ENCODE measurements at regions of chr9 and their contacts with region 1.

Region 1: DNA sequence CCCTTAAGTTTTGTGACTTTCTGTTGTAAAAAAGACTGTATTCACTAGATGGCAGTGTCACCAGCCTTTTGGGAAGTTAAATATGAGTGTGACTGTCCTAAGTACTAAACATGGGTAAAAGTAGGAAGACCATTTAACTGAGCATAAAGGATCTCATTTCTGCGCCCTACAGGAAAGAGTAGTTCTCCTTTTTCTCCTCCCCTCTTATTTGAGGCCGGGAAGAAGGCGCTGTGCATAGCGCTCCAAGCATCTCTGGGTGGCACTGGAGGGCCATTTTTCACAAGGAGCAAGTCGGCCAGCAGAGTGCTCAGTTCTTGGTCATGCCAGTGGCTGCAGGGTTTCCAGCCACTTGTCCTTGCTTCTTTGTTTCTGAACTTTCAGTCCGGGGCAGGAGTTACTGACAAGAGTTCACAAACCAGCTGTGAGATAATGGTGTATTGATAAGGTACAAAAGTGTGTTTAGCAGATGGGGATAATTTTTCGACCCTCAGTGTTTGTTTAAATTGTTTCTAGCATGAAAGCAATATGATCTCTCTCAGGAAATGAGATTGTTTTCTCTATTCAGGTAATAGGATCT is 227.6 kb upstream of the DMRT1 start:
- DNase-seq: peak; percentile 82
- ATAC-seq: peak; percentile 89

Region 2: GRCh38 chr9:385818-386398 is 228.0 kb before region 1 on chr9:
- intact Hi-C with region 1: loop called (anchors 5 kb)
- DNase-seq: no peak
- ATAC-seq: peak; percentile 93

Region 3: DNA sequence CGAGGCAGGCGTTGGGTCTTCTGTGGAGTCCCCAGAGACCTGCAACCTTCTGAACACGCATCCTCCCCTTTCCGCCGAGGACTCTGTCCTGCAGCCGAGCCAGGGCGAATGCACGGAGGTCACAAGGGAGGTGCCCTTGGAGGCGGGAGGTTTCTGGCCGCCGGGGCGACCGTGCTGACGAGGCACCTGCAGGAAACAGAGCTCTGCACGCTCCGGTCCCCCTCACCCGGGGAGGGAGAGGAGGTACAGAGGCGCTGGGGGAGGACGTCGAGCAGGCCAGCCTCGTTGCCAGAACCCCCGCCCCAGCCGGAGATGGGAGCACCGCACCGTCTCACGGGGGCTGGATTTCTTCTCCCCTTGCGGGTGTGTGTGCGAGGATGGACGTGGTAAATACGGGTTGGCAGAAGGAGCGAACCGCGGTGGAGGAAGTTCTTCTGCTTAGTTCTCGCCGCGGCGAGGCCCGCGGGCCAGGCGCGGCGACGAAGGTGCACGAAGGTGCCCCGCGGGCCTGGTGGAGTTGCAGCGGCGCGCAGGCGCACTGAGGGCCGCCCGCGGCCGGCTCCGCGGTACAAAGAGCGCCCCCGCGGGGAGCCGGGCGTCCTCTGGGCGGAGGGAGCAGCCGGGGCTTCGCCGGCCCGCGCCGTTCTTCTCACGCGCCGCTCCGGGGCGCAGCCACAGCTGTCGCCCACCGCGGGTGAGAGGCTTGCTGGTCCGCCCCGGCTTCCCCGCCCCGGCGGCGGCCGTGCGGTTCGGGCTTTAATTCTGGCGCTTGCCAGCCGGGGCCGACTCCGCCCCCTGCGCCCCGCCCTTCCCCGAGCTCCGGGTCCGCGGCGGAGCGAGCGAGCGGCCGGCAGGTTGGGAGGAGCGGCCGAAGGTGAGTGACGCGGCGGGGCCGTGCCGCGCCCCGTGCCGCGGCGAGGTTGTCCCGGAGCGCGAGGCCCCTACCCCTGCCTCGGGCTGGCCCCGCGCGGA is 109.7 kb before region 1 on chr9:
- intact Hi-C with region 1: loop called (anchors 5 kb)
- DNase-seq: peak; percentile 89
- ATAC-seq: peak; percentile 85

Region 4: DNA sequence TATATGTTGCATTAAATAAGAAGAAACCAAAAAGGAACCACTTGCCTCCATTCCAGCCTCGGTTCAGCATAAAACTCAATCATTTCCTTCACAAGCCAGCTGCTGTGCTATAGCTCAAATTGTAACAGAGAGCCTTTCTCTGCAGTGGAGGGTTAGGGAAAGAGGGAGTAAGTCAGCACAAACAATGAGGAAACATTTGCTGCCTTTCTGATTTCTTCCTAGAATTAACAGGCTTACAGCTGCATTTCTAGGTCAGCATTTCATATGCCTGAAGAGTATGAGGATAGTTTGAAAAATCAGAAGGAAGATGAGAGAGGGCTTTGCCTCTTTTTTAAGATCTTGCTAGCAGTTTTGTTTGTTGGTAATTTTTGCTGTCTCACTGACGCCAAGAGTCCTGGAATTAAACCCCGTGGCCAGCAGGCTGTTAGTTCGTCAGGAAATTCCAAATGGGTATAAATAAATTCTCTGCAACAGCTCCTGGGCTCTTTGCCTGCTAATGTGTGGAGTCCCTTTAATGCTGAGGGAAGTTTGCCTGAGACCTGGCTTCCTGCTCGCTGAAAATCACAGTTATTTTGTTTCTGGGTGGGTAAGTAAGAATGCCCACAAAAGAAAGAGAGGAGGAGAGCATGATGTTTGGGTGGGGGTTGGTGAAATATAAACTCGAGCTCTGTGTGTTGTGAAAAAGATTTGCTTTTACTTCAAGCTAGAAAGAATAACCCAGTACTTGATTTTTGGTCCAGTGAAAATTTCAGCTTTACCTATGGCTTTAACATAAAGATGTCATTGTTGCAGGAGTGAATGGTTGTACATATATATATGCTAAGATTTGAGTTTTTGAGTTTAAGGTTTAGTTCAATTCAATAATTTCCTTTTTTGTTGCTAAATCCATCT is 79.6 kb after region 1 on chr9:
- intact Hi-C with region 1: loop called (anchors 5 kb)
- DNase-seq: no peak
- ATAC-seq: peak; percentile 68

Region 5: GRCh38 chr9:763692-764524 is 150.0 kb after region 1 on chr9:
- intact Hi-C with region 1: loop called (anchors 2 kb)
- DNase-seq: no peak
- ATAC-seq: peak; percentile 95

Region 6: GRCh38 chr9:1009101-1009707 is 395.3 kb after region 1 on chr9:
- intact Hi-C with region 1: loop called (anchors 5 kb)
- DNase-seq: peak; percentile 87
- ATAC-seq: peak; percentile 95